K562 (cell line): ENCODE measurements at regions of chr12 and their contacts with region 1.

Region 1: DNA sequence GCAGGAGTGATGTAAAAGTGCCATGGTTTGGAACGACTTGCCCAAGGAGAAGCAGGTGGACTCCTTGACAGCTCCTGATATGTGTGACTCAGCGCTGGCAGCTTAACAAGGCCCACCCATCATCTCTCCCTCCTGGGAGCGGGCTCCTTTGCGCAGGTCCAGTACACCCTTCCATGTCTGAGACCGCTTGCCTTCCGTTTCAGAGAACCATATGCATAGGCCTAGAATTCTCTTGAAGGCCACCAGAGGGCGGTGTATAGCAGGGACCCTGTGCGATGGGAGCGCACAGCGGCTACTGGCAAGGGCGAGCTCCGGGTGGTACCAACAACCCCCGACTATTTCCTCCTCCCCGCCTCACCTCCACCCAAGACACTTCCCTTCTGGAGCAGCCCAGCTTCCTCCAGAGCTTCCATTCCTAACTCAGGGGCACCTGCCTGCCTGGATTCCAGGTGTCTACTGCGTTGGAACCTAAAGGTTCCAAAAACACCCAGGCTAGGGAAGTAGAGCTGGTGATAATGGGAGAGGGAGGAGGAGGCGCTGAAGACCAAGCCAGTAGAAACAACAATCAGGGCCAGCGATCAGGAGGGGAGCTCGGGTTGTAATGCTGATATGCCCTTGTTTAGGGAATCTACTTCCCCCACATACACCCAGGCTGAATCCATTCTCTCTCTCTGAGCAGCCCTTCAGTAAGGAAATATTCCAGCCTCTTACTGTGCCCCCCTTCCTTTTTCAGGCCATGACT is 6.2 kb downstream of the DHH start:
- DNase-seq: peak; percentile 82 to 97 (median 87)
- ATAC-seq: peak; percentile 83
- H3K4me3 ChIP-seq: peak overlapping the region; percentile 22; the same call in 1 of the 2 replicates
- H3K27ac ChIP-seq: peak overlapping the region; percentile 40; the same call in 2 of the 3 replicates
- H3K4me1 ChIP-seq: peaks cover 49 to 57% of the 10 kb centered on the region in 2 experiments
- H3K27me3 ChIP-seq: no peaks in the 10 kb centered on the region
- CTCF ChIP-seq: peak; percentile 93 to 98 (median 96)
- EP300 ChIP-seq: peak; percentile 39; the same call in 1 of the 2 replicates
- POLR2A ChIP-seq: no peak; the same call in 1 of the 2 replicates
- RAD21 ChIP-seq: peak; percentile 85 to 88

Region 2: GRCh38 chr12:48379780-48380179 is 708.6 kb before region 1 on chr12:
- CTCF ChIA-PET with region 1: no interaction called
- POLR2A ChIA-PET with region 1: no interaction called
- in situ Hi-C with region 1: no loop called
- intact Hi-C with region 1: no loop called
- DNase-seq: no peak
- ATAC-seq: no peak
- H3K4me3 ChIP-seq: no peak overlapping the region
- H3K27ac ChIP-seq: no peak overlapping the region
- H3K4me1 ChIP-seq: no peaks in the 10 kb centered on the region
- H3K27me3 ChIP-seq: no peaks in the 10 kb centered on the region; a peak in 1 of 5 replicates
- CTCF ChIP-seq: no peak
- EP300 ChIP-seq: no peak
- POLR2A ChIP-seq: no peak
- RAD21 ChIP-seq: no peak

Region 3: GRCh38 chr12:48995061-48995879 is 93.1 kb before region 1 on chr12:
- CTCF ChIA-PET with region 1: interaction called, 4 read pairs
- POLR2A ChIA-PET with region 1: interaction called, 3 read pairs
- in situ Hi-C with region 1: no loop called
- intact Hi-C with region 1: loop called (anchors 1 kb)
- DNase-seq: peak; percentile 84 to 90 (median 88)
- ATAC-seq: peak; percentile 80
- H3K4me3 ChIP-seq: no peak overlapping the region
- H3K27ac ChIP-seq: no peak overlapping the region
- H3K4me1 ChIP-seq: peaks cover 12 to 49% of the 10 kb centered on the region in 2 experiments
- H3K27me3 ChIP-seq: 0 out of 5 replicates have a peak, but pooled peaks cover 0 to 5% of the 10 kb centered on the region in 2 experiments
- CTCF ChIP-seq: peak; percentile 85 to 88 (median 87)
- EP300 ChIP-seq: no peak
- POLR2A ChIP-seq: no peak
- RAD21 ChIP-seq: peak; percentile 60 to 78

Region 4: DNA sequence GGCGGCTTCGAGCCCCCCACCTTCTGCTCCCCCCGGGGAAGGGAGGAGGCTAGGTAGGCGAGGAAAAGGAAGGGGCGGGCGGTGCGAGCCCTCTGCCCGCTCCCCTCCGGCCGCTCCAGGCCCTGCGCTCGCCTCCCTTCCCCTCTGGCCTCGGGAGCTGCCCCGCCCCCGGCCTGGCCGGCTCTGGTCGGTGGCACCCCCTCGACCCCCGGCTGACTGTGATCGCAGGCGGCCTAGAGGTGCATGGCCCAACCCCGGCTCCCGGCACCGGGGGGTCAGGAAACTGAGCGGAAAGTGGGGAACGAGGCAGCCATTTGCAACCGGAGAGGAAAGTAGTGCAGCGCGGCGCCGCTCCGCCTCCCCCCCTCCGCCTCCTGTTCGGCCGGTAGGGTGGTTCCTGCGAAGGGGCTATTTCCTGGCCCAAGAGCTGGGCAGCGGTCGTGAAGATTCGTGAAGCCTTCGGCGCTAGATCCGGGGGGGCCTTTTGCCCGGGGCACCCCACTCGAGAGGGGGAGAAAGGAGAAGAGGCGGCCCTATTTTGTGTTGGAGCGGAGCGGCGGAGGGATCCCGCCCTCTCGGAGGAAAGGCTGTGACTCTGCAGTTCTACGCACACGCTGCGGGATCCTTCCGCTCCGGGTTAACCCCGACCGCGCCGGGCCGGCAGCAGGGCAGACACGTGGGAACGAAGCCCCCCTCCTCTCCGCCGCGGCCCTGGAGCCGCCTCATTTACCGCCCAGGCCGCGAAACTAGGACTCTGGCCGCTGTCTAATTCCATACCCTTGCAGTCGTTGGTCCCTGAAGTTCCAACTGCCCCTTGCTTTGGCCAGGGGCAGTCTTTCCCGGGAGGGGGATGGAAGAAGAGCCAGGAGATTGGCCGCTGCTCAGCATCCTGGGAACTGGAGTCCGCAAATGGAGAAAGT is 27.9 kb before region 1 on chr12 and contains the start of gene KMT2D:
- CTCF ChIA-PET with region 1: interaction called, 15 read pairs
- POLR2A ChIA-PET with region 1: interaction called, 22 read pairs
- in situ Hi-C with region 1: no loop called
- intact Hi-C with region 1: loop called (anchors 1 kb)
- DNase-seq: peak; percentile 89 to 96 (median 91)
- ATAC-seq: peak; percentile 72
- H3K4me3 ChIP-seq: peak within 1 kb of the TSS; percentile 94
- H3K27ac ChIP-seq: peak within 1 kb of the TSS; percentile 98
- H3K4me1 ChIP-seq: peaks cover 15 to 20% of the 10 kb centered on the region in 2 experiments; a peak in 4 of 5 replicates
- H3K27me3 ChIP-seq: no peaks in the 10 kb centered on the region
- CTCF ChIP-seq: 0 out of 6 replicates have a peak, but pooled peaks of 2 of the 3 experiments have one; percentile 6 to 13
- EP300 ChIP-seq: peak; percentile 53; the same call in 1 of the 2 replicates
- POLR2A ChIP-seq: peak; percentile 88
- RAD21 ChIP-seq: no peak
- polyA plus RNA-seq, gene KMT2D: 0.22 to 1.4 TPM

Region 5: DNA sequence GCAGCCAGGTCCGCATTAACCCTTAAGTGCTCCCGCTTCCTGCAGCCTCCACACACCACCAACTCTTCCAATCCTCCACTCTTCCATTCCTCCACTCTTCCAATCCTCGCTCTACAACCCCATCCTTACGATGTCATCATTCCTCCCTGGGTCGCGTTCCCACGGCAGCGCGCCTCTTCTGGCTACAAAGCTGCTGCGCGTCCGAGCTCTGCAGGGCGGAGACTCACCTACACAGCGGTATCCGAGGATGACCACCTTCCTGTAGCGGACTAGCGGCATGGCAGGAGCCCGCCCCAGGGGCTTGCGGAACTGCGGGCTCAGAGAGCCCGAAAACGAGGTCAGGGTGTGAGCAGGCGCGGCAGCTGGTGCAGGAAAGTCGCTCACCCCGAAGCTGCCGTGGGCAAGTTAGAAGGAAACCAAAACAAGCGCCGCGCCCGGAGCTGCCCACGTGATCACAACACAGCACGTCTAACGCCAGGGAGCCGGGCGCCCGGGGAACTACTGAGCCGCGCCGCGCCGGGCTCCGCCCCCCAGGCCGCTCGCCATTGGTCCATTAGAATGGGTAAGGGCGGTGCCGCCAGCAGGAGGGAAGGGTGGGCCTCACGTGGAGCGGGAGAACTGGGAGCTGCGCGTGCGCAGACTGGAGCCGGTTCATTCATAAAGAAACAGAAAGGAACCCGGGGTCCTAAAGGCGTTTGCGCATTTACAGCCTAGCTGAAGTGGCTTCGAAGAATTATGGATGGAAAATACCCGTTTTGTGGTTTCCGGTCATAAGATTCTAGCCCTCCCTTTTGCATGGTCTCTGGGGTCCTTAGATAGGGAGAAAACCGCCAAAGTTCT is 18.6 kb before region 1 on chr12 and contains the start of gene RHEBL1:
- CTCF ChIA-PET with region 1: interaction called, 15 read pairs
- POLR2A ChIA-PET with region 1: interaction called, 23 read pairs
- in situ Hi-C with region 1: no loop called
- intact Hi-C with region 1: loop called (anchors 1 kb)
- DNase-seq: peak; percentile 99
- ATAC-seq: peak; percentile 100
- H3K4me3 ChIP-seq: peak within 1 kb of the TSS; percentile 96
- H3K27ac ChIP-seq: peak within 1 kb of the TSS; percentile 79
- H3K4me1 ChIP-seq: peaks cover 10 to 18% of the 10 kb centered on the region in 2 experiments; a peak in 4 of 5 replicates
- H3K27me3 ChIP-seq: no peaks in the 10 kb centered on the region
- CTCF ChIP-seq: peak; percentile 43 to 58 (median 57)
- EP300 ChIP-seq: no peak
- POLR2A ChIP-seq: peak; percentile 74
- RAD21 ChIP-seq: no peak
- polyA plus RNA-seq, gene RHEBL1: 27.4 to 36.1 TPM

Region 6: GRCh38 chr12:49110464-49111155 is 22.2 kb after region 1 on chr12 and contains the start of gene LMBR1L:
- CTCF ChIA-PET with region 1: interaction called, 6 read pairs
- POLR2A ChIA-PET with region 1: interaction called, 103 read pairs
- in situ Hi-C with region 1: no loop called
- intact Hi-C with region 1: no loop called
- DNase-seq: peak; percentile 99 to 100 (median 99)
- ATAC-seq: peak; percentile 97
- H3K4me3 ChIP-seq: peak within 1 kb of the TSS; percentile 81
- H3K27ac ChIP-seq: peak within 1 kb of the TSS; percentile 84
- H3K4me1 ChIP-seq: peaks cover 15 to 26% of the 10 kb centered on the region in 2 experiments; a peak in 4 of 5 replicates
- H3K27me3 ChIP-seq: no peaks in the 10 kb centered on the region
- CTCF ChIP-seq: peak; percentile 55 to 60 (median 56); a peak in 5 of 6 replicates
- EP300 ChIP-seq: no peak
- POLR2A ChIP-seq: peak; percentile 79
- RAD21 ChIP-seq: no peak; a peak in 2 of 4 replicates
- polyA plus RNA-seq, gene LMBR1L: 2.5 to 5.3 TPM

Region 7: GRCh38 chr12:49121047-49121696 is 32.8 kb after region 1 on chr12:
- CTCF ChIA-PET with region 1: interaction called, 6 read pairs
- POLR2A ChIA-PET with region 1: interaction called, 3 read pairs
- in situ Hi-C with region 1: no loop called
- intact Hi-C with region 1: loop called (anchors 2 kb)
- DNase-seq: peak; percentile 31 to 65 (median 41)
- ATAC-seq: peak; percentile 75
- H3K4me3 ChIP-seq: no peak overlapping the region
- H3K27ac ChIP-seq: no peak overlapping the region
- H3K4me1 ChIP-seq: no peaks in the 10 kb centered on the region; a peak in 2 of 5 replicates
- H3K27me3 ChIP-seq: no peaks in the 10 kb centered on the region
- CTCF ChIP-seq: peak; percentile 58 to 66 (median 63)
- EP300 ChIP-seq: no peak
- POLR2A ChIP-seq: no peak
- RAD21 ChIP-seq: peak in 1 of 2 experiments; percentile 78; a peak in 3 of 4 replicates

Region 8: GRCh38 chr12:49232940-49233841 is 144.8 kb after region 1 on chr12:
- CTCF ChIA-PET with region 1: interaction called, 21 read pairs
- POLR2A ChIA-PET with region 1: interaction called, 3 read pairs
- in situ Hi-C with region 1: no loop called
- intact Hi-C with region 1: loop called (anchors 1 kb)
- DNase-seq: peak; percentile 85 to 98 (median 89)
- ATAC-seq: peak; percentile 90
- H3K4me3 ChIP-seq: peak overlapping the region; percentile 34
- H3K27ac ChIP-seq: peak overlapping the region; percentile 87
- H3K4me1 ChIP-seq: peaks cover 27 to 40% of the 10 kb centered on the region in 2 experiments
- H3K27me3 ChIP-seq: no peaks in the 10 kb centered on the region
- CTCF ChIP-seq: peak; percentile 45 to 62 (median 57)
- EP300 ChIP-seq: peak; percentile 88
- POLR2A ChIP-seq: no peak
- RAD21 ChIP-seq: peak; percentile 16 to 29; a peak in 2 of 4 replicates